Prostate gland (tissue), 2 donors: ENCODE measurements at regions of chr1 and their contacts with region 1.

Region 1: DNA sequence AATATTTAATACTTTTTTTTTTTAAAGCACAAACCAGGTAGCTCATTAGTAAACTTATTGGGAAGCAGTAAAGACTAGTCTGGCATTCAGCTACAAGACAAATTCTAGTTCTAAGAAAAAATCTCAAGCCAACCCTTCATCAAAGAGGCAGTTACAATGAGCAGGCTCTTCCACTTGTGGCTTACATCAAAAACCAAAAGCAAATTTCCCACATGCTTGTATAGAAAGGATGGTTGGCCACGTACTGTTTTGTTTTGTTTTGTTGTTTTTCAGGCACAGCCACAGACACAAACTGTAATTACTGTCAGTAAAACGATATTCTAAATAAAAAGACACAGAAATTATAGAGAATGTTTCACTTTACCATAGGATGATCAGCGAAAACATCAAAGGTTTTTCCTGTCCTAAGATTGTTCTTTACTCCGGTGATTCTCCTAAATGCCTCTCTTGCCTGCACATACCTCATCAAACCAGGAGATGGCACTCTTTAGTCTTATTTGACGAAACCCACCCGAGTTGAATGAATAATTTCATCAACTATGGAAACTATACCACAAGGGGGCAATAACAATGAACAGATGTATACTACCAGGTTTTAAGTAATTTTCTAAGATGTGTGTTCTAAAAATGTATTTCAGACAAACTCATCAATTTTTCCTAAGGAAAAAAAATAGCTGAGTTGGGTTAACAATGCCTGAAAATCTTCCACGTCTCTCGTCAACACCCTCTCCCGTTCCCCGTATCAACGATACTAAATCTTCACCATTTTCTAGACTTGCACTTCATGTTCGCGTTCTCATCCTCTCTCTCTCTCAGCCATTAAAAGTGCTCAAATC is 26.9 kb downstream of the RPL5 start:
- DNase-seq: peak; percentile 76
- H3K4me3 ChIP-seq: no peak overlapping the region
- H3K27ac ChIP-seq: peak overlapping the region in 1 of 2 donors; percentile 30
- H3K4me1 ChIP-seq: no peaks in the 10 kb centered on the region
- H3K27me3 ChIP-seq: no peaks in the 10 kb centered on the region
- CTCF ChIP-seq: peak; percentile 89 to 99 (median 98)
- POLR2A ChIP-seq: no peak

Region 2: GRCh38 chr1:92960395-92961130 is 101.8 kb after region 1 on chr1:
- intact Hi-C with region 1: loop called (anchors 2 kb)
- DNase-seq: peak; percentile 66
- H3K4me3 ChIP-seq: peak overlapping the region; percentile 69 to 95
- H3K27ac ChIP-seq: peak overlapping the region; percentile 95 to 96
- H3K4me1 ChIP-seq: no peaks in the 10 kb centered on the region
- H3K27me3 ChIP-seq: no peaks in the 10 kb centered on the region
- CTCF ChIP-seq: peak in 3 of 4 experiments; percentile 67 to 79 (median 75)
- POLR2A ChIP-seq: peak; percentile 29

Region 3: DNA sequence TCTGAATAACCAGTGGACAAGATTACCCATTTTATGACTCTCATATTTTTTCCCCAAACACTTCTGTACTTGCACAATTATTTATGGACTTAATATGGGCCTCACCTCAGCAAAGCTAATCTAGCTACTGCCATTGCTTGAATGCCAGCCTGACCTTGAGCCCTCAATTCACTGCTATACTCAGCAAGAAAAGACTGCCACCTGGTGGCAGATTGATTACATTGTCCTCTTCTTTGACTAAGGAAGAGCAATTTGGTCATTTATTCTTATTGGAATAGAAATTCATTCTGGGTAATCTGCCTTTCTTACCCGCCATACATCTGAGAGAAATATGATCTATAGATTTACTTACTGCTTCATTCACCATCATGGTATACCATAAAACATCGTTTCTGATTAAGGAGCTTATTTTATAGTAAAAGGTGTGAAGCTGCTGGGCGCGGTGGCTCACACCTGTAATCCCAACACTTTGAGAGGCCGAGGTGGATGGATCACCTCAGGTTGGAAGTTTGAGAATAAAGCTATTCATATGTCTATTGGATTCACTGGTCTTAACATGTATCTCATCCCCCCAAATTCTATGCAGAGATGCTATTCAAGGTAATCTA is 135.4 kb after region 1 on chr1:
- intact Hi-C with region 1: loop called (anchors 1 kb)
- DNase-seq: peak; percentile 88
- H3K4me3 ChIP-seq: no peak overlapping the region
- H3K27ac ChIP-seq: no peak overlapping the region
- H3K4me1 ChIP-seq: no peaks in the 10 kb centered on the region
- H3K27me3 ChIP-seq: no peaks in the 10 kb centered on the region
- CTCF ChIP-seq: peak; percentile 77 to 95 (median 88)
- POLR2A ChIP-seq: no peak